ENCODE measurements at regions of chr22 and their contacts with region 1.

Region 1: GRCh38 chr22:36528795-36529751 is at the start of gene EIF3D:
- DNase-seq: peak; percentile 96
- ATAC-seq: peak; percentile 92
- H3K4me3 Mint-ChIP-seq: peak within 1 kb of the TSS; percentile 94
- H3K27ac Mint-ChIP-seq: peak within 1 kb of the TSS; percentile 97
- H3K4me1 Mint-ChIP-seq: peaks cover 25% of the 10 kb centered on the region
- H3K27me3 Mint-ChIP-seq: no peaks in the 10 kb centered on the region
- CTCF ChIP-seq: no peak
- total RNA-seq, gene EIF3D: 285 and 301 TPM in 2 replicates

Region 2: DNA sequence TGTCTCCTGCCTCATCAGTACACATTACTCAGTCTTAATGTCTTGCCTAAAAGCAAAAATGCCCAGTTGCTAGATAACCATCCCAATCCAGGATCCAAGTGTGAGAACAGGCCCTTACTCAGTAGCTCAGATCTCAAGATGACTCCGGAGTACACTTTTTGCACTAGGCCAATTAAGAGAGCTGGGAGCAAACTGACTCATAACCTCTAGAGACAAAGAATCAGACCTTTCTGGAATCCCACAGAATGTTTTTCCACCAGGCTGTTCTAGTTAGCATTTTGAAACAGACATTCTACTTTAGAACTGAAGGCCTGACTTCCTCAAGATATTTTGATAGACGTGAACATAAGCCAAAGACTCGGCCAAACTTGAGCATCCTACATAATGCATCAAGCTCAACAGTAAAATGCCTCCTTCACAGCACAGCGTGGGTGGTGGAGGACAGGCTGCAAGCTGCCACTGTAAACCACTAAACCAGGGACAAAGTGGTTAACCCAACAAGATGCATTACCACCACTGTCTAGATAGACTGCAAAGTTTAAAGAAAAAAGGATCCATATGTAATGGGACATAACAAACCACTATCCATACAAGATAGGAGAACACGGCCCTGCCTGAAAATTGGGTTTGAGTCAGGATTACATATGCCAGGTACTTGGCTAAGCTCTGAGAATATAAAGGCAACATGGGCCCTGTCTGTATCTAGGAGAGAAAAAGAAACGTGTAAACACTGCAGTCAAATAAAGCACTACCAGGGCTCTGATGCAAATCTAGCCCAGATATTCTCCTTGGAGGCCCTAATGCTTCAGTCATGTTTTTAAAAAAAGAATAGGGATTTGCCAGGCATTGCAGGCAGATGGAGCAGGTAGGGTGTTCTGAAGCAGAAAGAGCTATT is 189.7 kb before region 1 on chr22:
- CTCF ChIA-PET with region 1: no interaction called
- POLR2A ChIA-PET with region 1: no interaction called
- intact Hi-C with region 1: no loop called
- DNase-seq: no peak
- ATAC-seq: no peak
- H3K4me3 Mint-ChIP-seq: no peak overlapping the region
- H3K27ac Mint-ChIP-seq: peak overlapping the region; percentile 53
- H3K4me1 Mint-ChIP-seq: peaks cover 66% of the 10 kb centered on the region
- H3K27me3 Mint-ChIP-seq: no peaks in the 10 kb centered on the region
- CTCF ChIP-seq: no peak

Region 3: GRCh38 chr22:36454916-36455570 is 74.0 kb before region 1 on chr22:
- CTCF ChIA-PET with region 1: no interaction called
- POLR2A ChIA-PET with region 1: no interaction called
- intact Hi-C with region 1: loop called (anchors 2 kb)
- DNase-seq: peak; percentile 91
- ATAC-seq: peak; percentile 66
- H3K4me3 Mint-ChIP-seq: peak overlapping the region; percentile 69
- H3K27ac Mint-ChIP-seq: peak overlapping the region; percentile 95
- H3K4me1 Mint-ChIP-seq: peaks cover 56% of the 10 kb centered on the region
- H3K27me3 Mint-ChIP-seq: no peaks in the 10 kb centered on the region
- CTCF ChIP-seq: no peak

Region 4: GRCh38 chr22:36493690-36494110 is 35.4 kb before region 1 on chr22:
- CTCF ChIA-PET with region 1: no interaction called
- POLR2A ChIA-PET with region 1: interaction called, 15 read pairs
- intact Hi-C with region 1: no loop called
- DNase-seq: peak; percentile 41
- ATAC-seq: peak; percentile 86
- H3K4me3 Mint-ChIP-seq: peak overlapping the region; percentile 67
- H3K27ac Mint-ChIP-seq: peak overlapping the region; percentile 79
- H3K4me1 Mint-ChIP-seq: peaks cover 26% of the 10 kb centered on the region
- H3K27me3 Mint-ChIP-seq: no peaks in the 10 kb centered on the region
- CTCF ChIP-seq: no peak

Region 5: DNA sequence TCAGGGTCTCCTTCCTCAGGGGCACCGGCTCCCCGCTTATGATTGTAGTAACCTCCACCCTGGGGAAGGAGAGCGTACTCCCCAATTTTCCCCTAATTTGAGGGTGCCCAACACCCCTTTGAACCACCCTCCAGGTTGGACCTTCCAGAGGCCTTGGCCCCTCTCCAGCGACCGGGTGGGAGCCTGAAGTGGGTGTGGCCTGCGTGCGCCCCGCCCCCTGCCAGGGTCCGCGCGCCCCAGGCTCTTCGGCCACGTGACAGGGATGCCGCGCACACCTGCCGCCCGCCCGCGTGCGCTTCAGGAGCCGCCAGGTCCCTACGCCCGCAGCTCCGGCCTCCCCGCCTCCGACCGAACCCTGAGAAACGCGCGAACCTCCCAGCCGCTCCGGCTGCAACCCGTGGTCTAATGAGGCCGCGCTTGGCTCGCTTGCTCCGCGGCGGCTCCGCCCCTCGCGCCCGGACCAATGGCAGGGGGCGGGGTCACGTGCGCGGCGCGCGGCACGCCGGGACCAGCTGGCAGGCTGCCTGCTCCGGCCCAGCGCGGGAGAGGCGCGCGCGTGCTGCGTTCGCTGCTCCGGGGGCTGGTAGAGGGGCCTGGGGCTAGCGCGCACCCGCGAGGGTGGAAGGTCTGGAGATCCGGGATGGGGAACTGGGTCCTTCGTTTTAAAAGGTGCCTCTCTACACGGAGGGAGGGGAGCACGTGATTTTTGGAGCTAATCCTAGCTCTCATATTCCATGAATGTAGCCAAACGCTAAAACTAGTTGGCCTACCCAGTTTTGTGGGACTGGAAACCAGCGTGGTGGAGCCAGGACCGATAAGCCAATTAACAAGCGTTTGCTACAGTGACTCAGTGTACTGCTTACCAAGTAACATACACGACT is 22.2 kb before region 1 on chr22 and contains the start of gene FOXRED2:
- CTCF ChIA-PET with region 1: interaction called, 4 read pairs
- POLR2A ChIA-PET with region 1: interaction called, 21 read pairs
- intact Hi-C with region 1: loop called (anchors 1 kb)
- DNase-seq: peak; percentile 91
- ATAC-seq: peak; percentile 96
- H3K4me3 Mint-ChIP-seq: peak within 1 kb of the TSS; percentile 76
- H3K27ac Mint-ChIP-seq: peak within 1 kb of the TSS; percentile 63
- H3K4me1 Mint-ChIP-seq: peaks cover 17% of the 10 kb centered on the region
- H3K27me3 Mint-ChIP-seq: no peaks in the 10 kb centered on the region
- CTCF ChIP-seq: no peak
- total RNA-seq, gene FOXRED2: 3.9 and 6.5 TPM in 2 replicates

Region 6: GRCh38 chr22:36552289-36552688 is 23.2 kb after region 1 on chr22:
- CTCF ChIA-PET with region 1: no interaction called
- POLR2A ChIA-PET with region 1: interaction called, 21 read pairs
- intact Hi-C with region 1: loop called (anchors 1 kb)
- DNase-seq: no peak
- ATAC-seq: peak; percentile 93
- H3K4me3 Mint-ChIP-seq: peak overlapping the region; percentile 44
- H3K27ac Mint-ChIP-seq: peak overlapping the region; percentile 91
- H3K4me1 Mint-ChIP-seq: peaks cover 53% of the 10 kb centered on the region
- H3K27me3 Mint-ChIP-seq: no peaks in the 10 kb centered on the region
- CTCF ChIP-seq: no peak

Region 7: DNA sequence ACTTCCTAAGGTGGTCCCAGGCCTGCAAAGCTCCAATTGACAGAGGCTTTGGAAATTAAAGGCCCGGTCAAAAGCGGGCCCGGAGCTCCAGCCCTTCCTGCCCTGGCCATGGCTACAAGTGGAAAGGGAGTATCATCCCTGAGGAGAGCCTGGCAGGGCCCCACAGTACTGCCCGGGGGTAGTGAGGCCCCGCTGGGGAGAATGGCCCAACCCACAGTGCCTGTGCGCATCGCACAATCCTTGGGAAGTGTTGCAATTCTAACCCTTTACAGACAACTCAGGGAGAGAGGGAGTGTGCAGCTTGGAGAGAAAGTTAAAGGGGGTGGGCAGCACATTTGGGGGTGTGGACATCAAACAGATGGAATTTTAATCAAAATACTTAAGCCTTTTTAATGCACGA is 170.8 kb after region 1 on chr22:
- CTCF ChIA-PET with region 1: no interaction called
- POLR2A ChIA-PET with region 1: no interaction called
- intact Hi-C with region 1: no loop called
- DNase-seq: no peak
- ATAC-seq: no peak
- H3K4me3 Mint-ChIP-seq: no peak overlapping the region
- H3K27ac Mint-ChIP-seq: no peak overlapping the region
- H3K4me1 Mint-ChIP-seq: peaks cover 4% of the 10 kb centered on the region
- H3K27me3 Mint-ChIP-seq: peaks cover 44% of the 10 kb centered on the region
- CTCF ChIP-seq: no peak

Region 8: DNA sequence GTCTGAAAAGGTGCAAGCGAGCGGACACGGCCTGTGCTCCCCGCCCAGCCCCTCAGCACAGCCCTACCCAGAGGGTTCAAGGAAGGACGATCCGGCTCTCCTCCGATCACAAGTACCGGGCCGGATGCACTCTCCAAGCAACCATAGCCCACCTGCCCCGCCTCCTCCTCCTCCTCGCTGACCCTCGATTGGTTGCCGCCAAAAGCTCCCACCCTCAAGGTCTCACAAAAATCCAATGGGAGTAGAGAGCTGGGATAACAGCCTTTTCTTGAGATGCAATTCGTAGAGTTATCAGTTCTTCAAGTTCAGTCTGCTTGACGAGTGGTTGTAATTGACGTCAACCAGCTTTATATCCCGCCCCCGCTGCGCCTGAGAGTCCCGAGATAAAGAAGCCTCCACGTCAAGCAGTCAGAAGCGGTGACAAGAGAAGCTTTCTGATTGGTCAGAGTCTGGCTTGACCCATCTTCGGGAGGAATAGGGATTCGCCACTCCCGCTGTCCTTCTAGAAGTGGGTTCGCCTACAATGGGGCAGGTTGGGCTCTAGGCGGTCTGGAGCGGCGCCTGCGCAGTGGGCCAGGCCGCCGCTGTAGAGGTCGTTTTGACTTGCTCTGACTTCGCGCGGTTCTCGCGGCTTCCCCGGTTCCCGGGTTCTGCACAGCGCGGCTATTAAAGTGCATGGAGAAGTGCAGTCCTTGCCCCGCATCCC is 247.0 kb after region 1 on chr22 and contains the start of gene IFT27:
- CTCF ChIA-PET with region 1: no interaction called
- POLR2A ChIA-PET with region 1: interaction called, 10 read pairs
- intact Hi-C with region 1: loop called (anchors 5 kb)
- DNase-seq: peak; percentile 81
- ATAC-seq: peak; percentile 89
- H3K4me3 Mint-ChIP-seq: peak within 1 kb of the TSS; percentile 88
- H3K27ac Mint-ChIP-seq: peak within 1 kb of the TSS; percentile 89
- H3K4me1 Mint-ChIP-seq: peaks cover 14% of the 10 kb centered on the region
- H3K27me3 Mint-ChIP-seq: no peaks in the 10 kb centered on the region
- CTCF ChIP-seq: no peak
- total RNA-seq, gene IFT27: 26.2 and 32.7 TPM in 2 replicates